K562 (cell line): ENCODE measurements at regions of chr15 and their contacts with region 1.

Region 1: GRCh38 chr15:63389902-63390670 is 8.4 kb upstream of the CA12 start:
- DNase-seq: peak in 3 of 4 experiments; percentile 31 to 50 (median 38)
- ATAC-seq: peak; percentile 6; the same call in 1 of the 3 replicates
- H3K4me3 ChIP-seq: no peak overlapping the region
- H3K27ac ChIP-seq: no peak overlapping the region
- H3K4me1 ChIP-seq: peaks cover 17 to 46% of the 10 kb centered on the region in 2 experiments
- H3K27me3 ChIP-seq: no peaks in the 10 kb centered on the region
- CTCF ChIP-seq: no peak
- EP300 ChIP-seq: no peak
- POLR2A ChIP-seq: no peak
- RAD21 ChIP-seq: no peak

Region 2: GRCh38 chr15:63344737-63345390 is 45.2 kb before region 1 on chr15:
- CTCF ChIA-PET with region 1: no interaction called
- POLR2A ChIA-PET with region 1: interaction called, 3 read pairs
- in situ Hi-C with region 1: no loop called
- intact Hi-C with region 1: loop called (anchors 5 kb)
- DNase-seq: peak in 3 of 4 experiments; percentile 37 to 44 (median 41)
- ATAC-seq: peak; percentile 42
- H3K4me3 ChIP-seq: no peak overlapping the region
- H3K27ac ChIP-seq: no peak overlapping the region; the same call in 2 of the 3 replicates
- H3K4me1 ChIP-seq: peaks cover 11 to 38% of the 10 kb centered on the region in 2 experiments
- H3K27me3 ChIP-seq: no peaks in the 10 kb centered on the region
- CTCF ChIP-seq: no peak
- EP300 ChIP-seq: peak; percentile 90
- POLR2A ChIP-seq: no peak
- RAD21 ChIP-seq: peak in 1 of 2 experiments; percentile 12; a peak in 1 of 4 replicates

Region 3: GRCh38 chr15:63504247-63504978 is 114.3 kb after region 1 on chr15 and contains the start of gene USP3:
- CTCF ChIA-PET with region 1: no interaction called
- POLR2A ChIA-PET with region 1: no interaction called
- in situ Hi-C with region 1: no loop called
- intact Hi-C with region 1: no loop called
- DNase-seq: peak; percentile 93 to 96 (median 94)
- ATAC-seq: peak; percentile 89
- H3K4me3 ChIP-seq: peak within 1 kb of the TSS; percentile 87
- H3K27ac ChIP-seq: peak within 1 kb of the TSS; percentile 95
- H3K4me1 ChIP-seq: peaks cover 23 to 39% of the 10 kb centered on the region in 2 experiments
- H3K27me3 ChIP-seq: no peaks in the 10 kb centered on the region
- CTCF ChIP-seq: peak in 2 of 3 experiments; percentile 17 to 44; a peak in 3 of 6 replicates
- EP300 ChIP-seq: peak; percentile 68; the same call in 1 of the 2 replicates
- POLR2A ChIP-seq: peak; percentile 88
- RAD21 ChIP-seq: peak in 1 of 2 experiments; percentile 2; a peak in 1 of 4 replicates
- polyA plus RNA-seq, gene USP3: 24.3 to 34.8 TPM